Lower lobe of right lung (tissue), 2 donors: ENCODE measurements at regions of chr12 and their contacts with region 1.

Region 1: DNA sequence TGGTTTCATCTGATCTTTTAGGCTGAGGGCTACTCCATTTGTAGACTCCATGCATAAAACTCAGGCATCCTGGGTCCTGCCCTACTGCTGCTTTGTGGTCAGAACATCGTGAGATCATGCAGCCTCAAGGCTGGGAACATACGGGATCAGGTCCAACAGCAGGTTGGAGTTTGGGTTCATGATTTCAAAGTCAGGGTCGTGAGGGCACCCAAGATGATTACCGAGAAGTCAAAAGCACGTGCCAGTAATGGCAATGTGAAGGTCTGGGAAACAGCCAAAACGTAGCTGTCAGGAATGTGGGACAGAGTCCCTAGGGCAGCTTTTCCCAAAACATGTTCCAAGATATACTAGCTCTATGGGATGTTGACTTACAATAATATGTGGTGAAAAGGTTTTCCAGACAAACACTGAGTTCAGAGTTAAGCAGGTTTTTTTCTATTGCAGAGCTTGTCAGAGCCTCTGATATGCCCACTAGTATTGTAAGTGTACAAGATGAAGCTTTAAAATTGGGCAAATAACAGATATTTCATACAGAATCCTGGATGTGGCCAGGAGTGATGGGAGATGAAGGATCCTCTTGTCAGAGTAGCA is 130.3 kb upstream of the DNM1L start:
- DNase-seq: no peak
- ATAC-seq: peak; percentile 25 to 63
- H3K4me3 ChIP-seq: no peak overlapping the region
- H3K27ac ChIP-seq: peak overlapping the region; percentile 53
- H3K4me1 ChIP-seq: peaks cover 64% of the 10 kb centered on the region
- H3K27me3 ChIP-seq: no peaks in the 10 kb centered on the region
- CTCF ChIP-seq: no peak

Region 2: GRCh38 chr12:31868965-31869364 is 679.8 kb before region 1 on chr12:
- intact Hi-C with region 1: no loop called
- DNase-seq: no peak
- ATAC-seq: no peak
- H3K4me3 ChIP-seq: no peak overlapping the region
- H3K27ac ChIP-seq: no peak overlapping the region
- H3K4me1 ChIP-seq: peaks cover 8% of the 10 kb centered on the region
- H3K27me3 ChIP-seq: no peaks in the 10 kb centered on the region
- CTCF ChIP-seq: no peak

Region 3: DNA sequence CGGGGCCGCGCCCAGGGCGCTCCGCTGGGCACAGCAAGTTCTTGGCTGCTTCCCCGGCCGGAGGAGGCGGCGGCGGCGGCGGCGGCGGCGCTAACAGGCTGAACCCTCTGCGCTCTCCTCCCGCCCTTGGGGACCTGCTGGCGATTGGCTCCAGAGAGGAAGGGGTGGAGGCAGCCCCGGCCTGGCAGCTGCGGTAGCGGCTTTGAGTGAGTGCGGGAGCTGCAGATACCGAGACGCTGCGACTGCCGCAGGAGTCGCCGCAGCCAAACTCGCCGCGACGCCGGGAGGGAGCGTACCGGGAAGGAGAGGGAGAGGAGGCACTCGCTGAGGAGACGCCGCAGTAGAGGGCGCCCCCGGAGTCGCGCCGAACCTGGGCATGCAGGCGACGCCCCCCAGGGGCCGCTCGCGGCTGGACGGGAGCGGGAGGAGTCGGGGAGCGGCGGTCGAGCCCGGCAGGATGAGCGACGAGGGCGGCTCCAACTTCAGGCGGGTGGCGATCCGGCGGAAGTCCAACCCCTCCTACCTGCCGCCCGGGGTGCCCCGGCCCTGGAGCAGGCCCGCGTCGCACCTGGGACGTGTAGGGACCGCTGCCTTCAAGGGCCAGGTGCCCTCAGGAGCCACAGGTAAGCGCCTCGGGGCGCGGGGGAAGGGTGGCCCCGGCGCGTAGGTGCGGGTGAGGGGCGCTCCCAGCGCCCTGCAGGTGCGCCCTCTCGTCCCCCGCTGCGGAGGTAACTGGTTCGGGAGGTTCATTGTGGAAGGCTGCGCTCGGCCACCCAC is 149.3 kb before region 1 on chr12 and contains the start of gene FGD4:
- intact Hi-C with region 1: no loop called
- DNase-seq: peak; percentile 95
- ATAC-seq: peak; percentile 96 to 98
- H3K4me3 ChIP-seq: peak within 1 kb of the TSS; percentile 91
- H3K27ac ChIP-seq: peak within 1 kb of the TSS; percentile 93
- H3K4me1 ChIP-seq: peaks cover 33% of the 10 kb centered on the region
- H3K27me3 ChIP-seq: peaks cover 4% of the 10 kb centered on the region
- CTCF ChIP-seq: peak; percentile 58
- total RNA-seq, gene FGD4: 55.6 TPM

Region 4: DNA sequence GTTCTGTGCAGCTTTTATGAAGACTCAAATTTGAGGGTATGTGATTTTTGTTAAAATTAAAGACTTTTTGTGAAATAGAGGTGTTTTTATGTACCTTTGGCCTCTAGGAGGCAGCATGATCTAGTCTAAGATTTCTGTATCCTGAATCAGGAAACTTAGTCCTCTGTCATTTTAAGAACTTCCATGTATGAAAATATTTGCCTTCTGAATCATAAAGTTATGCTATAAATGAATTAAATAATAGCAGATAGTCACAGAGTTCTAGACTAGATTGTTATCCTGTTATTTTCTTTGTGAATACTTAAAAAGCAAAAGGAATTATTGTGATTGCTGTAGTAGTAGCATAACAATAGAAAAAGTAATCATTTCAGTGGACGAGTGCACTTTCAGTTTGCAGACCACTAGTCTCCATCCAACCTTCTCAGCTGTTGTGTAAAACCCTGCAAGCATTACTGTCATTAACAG is 93.1 kb before region 1 on chr12:
- intact Hi-C with region 1: loop called (anchors 10 kb)
- DNase-seq: no peak
- ATAC-seq: peak; percentile 67 to 78
- H3K4me3 ChIP-seq: peak overlapping the region; percentile 48
- H3K27ac ChIP-seq: peak overlapping the region; percentile 19
- H3K4me1 ChIP-seq: peaks cover 46% of the 10 kb centered on the region
- H3K27me3 ChIP-seq: no peaks in the 10 kb centered on the region
- CTCF ChIP-seq: peak; percentile 62